ENCODE measurements at regions of chr1 and their contacts with region 1.

Region 1: GRCh38 chr1:76154206-76154956 is 79.8 kb downstream of the ST6GALNAC3 start:
- DNase-seq: peak; percentile 78
- ATAC-seq: peak; percentile 95

Region 2: GRCh38 chr1:76074321-76075187 is 79.8 kb before region 1 on chr1 and contains the start of gene ST6GALNAC3:
- intact Hi-C with region 1: no loop called
- DNase-seq: peak; percentile 88
- ATAC-seq: peak; percentile 98
- total RNA-seq, gene ST6GALNAC3: 5.9 TPM

Region 3: DNA sequence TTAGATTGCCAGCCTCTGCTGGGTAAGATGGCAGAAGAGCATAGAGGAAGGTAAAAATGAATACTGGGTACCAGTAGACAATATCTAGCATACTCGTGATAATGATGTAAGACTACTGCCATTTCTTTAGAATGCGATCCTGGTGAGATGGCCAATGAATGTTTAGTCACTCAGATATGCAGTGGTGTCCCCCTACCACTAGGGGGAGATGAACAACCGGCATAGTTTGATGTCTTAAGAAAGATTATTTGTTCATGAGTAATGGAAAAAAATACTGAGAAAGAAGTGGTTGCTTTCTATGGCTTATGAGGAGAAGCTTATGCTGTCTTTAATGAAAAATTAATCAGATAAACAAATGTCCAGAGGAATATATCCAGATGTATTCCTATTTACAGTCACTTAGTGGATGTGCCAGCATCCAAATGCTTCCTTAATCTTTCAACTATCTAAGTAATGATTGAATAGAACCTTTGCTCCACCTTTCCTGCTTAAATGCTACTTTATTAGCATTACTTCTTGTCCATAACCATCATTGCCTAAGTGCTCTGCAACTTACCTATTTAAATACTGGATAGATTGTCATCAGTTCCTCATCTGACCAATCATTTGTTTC is 176.7 kb after region 1 on chr1:
- intact Hi-C with region 1: loop called (anchors 5 kb)
- DNase-seq: no peak
- ATAC-seq: peak; percentile 39

Region 4: DNA sequence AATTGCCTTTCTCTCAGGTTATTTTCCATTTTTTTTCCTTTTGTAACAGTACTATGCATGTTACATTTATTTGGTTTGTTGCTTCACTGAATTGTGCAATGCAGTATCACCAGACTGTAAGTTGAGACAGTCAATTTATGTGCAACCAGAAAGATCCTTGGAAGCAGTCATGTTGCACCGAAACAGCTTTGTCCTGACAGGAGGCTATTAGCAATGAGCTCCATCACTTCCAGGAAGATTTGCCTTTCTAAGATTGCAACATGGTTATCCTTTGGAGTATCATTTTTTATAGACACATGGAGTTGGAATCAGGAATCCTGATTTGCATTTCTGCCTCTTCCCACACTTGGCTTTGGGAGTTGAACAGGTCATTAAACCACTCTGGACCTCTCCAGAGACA is 628.4 kb after region 1 on chr1:
- intact Hi-C with region 1: no loop called
- DNase-seq: no peak
- ATAC-seq: no peak

Region 5: GRCh38 chr1:77126307-77126706 is 971.9 kb after region 1 on chr1:
- intact Hi-C with region 1: loop called (anchors 10 kb)
- DNase-seq: no peak
- ATAC-seq: peak; percentile 39

Measured in left ventricle myocardium superior (tissue), 1 donor.